Activated naive CD4-positive, alpha-beta T cell treated with anti-CD3 and anti-CD28 coated beads for 36 hours (primary cell): ENCODE measurements at regions of chr1 and their contacts with region 1.

Region 1: DNA sequence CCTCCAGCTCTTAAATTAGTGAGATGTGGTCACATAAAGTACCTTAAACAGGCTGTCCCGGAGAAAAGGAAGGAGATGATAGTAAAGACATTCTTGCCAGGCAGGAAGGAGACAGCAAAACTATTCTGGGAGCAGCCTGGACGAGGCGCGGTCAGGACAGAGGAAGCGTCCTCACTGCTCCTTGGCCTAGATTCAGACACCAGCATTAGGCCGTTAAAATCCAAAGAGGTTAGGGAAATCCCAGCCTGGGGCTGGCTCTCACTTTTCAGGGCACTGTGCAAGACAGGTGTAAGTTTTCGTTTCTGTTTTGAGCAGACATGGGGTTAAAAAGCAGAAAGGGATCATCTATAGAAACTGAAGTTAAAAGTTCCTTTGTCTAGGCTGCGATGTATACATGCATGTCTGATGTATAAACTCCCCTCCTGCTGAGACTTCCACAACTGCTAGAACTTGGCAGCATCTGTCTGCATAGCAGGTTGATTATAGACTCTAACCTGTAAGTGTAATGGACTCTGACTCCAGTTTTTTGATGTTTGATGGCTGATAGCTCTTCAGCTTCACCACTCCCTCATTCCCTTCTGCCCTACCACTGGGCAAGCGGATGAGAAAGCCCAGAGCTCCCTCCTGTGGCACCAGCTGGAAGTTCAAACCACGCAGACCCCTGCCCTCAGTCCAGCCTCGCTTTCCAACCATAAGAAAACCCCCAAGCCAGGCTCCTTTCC is 21.5 kb downstream of the STPG1 start:
- DNase-seq: peak; percentile 80
- H3K4me3 Mint-ChIP-seq: peak overlapping the region; percentile 60
- H3K27ac Mint-ChIP-seq: peak overlapping the region; percentile 86
- H3K4me1 Mint-ChIP-seq: peaks cover 47% of the 10 kb centered on the region
- H3K27me3 Mint-ChIP-seq: no peaks in the 10 kb centered on the region

Region 2: DNA sequence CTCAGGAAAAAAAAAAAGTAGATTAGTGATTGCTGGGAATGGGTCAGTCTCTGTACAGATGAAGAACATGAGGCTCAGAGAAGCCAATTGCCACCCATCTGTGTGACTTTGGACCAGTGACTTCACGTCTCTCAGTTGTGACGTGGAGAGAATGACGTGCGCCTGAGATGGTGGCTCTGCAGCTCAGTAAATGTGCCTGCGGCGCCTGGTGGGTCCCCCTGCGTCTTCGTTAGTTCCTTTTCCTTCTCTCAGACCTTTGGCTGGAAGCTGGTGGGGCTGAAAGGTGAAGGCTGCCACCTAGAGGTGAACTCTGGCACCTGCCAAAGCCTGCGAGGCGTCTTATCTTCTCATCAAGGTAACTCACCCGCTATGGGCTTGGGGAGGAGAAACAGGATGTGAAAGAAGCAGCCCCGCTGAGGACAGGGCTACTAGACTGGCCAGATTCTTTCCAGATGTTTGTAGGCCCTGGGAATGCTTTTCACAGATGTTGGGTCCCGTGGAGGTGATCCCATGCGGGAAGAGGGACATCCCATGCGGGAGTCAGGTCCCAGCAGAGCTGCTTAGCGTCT is 852.3 kb before region 1 on chr1:
- CTCF ChIA-PET with region 1: no interaction called
- intact Hi-C with region 1: no loop called
- DNase-seq: peak; percentile 97
- H3K4me3 Mint-ChIP-seq: peak overlapping the region; percentile 33
- H3K27ac Mint-ChIP-seq: no peak overlapping the region
- H3K4me1 Mint-ChIP-seq: peaks cover 12% of the 10 kb centered on the region
- H3K27me3 Mint-ChIP-seq: no peaks in the 10 kb centered on the region

Region 3: DNA sequence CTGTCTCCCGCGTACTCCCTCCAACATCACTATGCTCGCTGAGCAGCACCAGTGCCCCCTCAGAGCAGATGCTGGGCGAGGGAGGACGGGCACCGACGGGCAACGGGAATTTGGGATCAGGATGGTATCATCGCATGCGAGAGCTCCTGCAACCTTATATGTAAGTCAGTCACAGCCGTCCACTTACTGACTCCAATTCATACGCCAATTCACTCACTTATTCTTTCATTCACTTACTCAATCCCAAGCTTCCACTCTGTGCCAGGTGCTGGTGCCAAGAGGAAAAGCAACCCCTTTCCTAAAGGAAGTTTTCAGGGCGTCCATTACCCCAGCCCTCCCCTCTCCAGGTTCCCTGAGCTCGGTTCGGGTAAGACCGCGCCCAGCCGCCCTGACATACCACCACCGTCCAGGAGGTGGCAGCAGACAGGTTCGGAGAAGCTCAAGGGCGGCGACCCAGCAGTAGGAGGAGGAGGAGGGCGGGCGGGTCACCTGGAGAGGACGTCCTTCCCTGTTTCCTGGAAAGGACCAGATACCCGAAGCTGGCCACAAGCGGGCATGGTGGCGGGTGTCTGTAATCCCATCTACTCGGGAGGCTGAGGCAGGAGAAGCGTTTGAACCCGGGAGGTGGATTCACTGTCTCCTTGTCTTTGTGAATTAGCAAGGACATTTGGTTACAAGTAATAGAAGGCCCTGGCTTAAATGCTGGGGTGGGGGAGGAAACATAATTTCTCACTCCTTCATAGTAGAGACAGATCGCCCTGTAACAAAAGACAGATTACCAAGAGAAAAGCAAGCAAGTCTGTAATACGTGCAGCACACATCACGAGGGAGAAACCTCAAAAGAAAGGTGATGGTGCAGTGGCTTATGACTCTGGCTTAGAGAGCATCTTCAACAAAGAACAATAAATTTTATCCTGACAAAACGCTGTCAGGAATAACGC is 241.5 kb before region 1 on chr1:
- CTCF ChIA-PET with region 1: interaction called, 29 read pairs
- intact Hi-C with region 1: loop called (anchors 1 kb)
- DNase-seq: peak; percentile 95
- H3K4me3 Mint-ChIP-seq: peak overlapping the region; percentile 63
- H3K27ac Mint-ChIP-seq: no peak overlapping the region
- H3K4me1 Mint-ChIP-seq: peaks cover 18% of the 10 kb centered on the region
- H3K27me3 Mint-ChIP-seq: peaks cover 32% of the 10 kb centered on the region

Region 4: GRCh38 chr1:24277420-24278169 is 114.4 kb before region 1 on chr1:
- CTCF ChIA-PET with region 1: interaction called, 12 read pairs
- intact Hi-C with region 1: no loop called
- DNase-seq: peak; percentile 54
- H3K4me3 Mint-ChIP-seq: no peak overlapping the region
- H3K27ac Mint-ChIP-seq: no peak overlapping the region
- H3K4me1 Mint-ChIP-seq: peaks cover 9% of the 10 kb centered on the region
- H3K27me3 Mint-ChIP-seq: peaks cover 14% of the 10 kb centered on the region

Region 5: GRCh38 chr1:24351918-24352627 is 40.0 kb before region 1 on chr1:
- CTCF ChIA-PET with region 1: interaction called, 7 read pairs
- intact Hi-C with region 1: loop called (anchors 2 kb)
- DNase-seq: peak; percentile 94
- H3K4me3 Mint-ChIP-seq: no peak overlapping the region
- H3K27ac Mint-ChIP-seq: peak overlapping the region; percentile 70
- H3K4me1 Mint-ChIP-seq: peaks cover 40% of the 10 kb centered on the region
- H3K27me3 Mint-ChIP-seq: no peaks in the 10 kb centered on the region

Region 6: DNA sequence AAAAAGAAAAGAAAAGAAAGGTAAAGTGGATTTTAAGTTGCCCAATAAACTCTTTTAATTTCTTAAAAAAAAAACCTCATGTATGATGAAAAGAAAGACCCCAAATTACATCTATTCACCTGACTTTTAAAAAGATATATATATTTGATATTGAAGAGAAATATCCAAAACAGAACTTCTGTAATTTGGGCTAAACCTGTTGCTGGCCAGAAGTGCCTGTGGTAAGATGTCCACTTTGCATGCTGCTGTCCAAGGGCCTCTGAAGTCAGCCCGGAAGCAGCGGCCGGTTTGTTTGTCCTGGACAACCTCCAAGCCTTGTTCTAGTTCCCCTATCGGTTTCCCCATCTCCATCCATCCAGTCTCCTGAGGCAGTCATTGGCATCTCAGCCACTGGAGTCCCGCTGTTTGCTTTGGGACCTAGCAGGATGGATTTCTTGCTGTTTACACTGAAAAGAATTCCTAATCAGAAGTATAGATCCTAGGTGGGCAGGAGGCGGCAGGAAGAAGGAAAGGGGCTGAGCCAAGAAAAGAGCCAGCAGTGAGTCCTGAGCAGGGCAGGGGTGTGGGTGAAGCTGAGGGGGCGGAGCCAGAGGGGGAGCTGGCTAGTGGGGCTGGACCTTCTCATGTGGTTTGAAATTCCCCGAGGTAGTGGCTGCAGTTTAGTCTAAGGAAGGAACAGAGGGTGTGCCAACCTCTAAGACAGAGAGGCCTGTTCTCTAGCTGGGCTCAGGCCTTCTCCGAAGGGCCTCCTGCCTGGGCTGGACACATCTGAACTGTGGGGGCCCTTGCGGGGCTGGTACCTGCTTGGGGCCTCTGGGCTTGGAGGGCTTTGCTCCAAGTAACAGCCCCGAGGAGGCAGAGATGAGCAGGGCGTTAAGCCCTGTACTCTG is 167.1 kb after region 1 on chr1:
- CTCF ChIA-PET with region 1: no interaction called
- intact Hi-C with region 1: no loop called
- DNase-seq: no peak
- H3K4me3 Mint-ChIP-seq: no peak overlapping the region
- H3K27ac Mint-ChIP-seq: no peak overlapping the region
- H3K4me1 Mint-ChIP-seq: peaks cover 15% of the 10 kb centered on the region
- H3K27me3 Mint-ChIP-seq: peaks cover 3% of the 10 kb centered on the region

Region 7: DNA sequence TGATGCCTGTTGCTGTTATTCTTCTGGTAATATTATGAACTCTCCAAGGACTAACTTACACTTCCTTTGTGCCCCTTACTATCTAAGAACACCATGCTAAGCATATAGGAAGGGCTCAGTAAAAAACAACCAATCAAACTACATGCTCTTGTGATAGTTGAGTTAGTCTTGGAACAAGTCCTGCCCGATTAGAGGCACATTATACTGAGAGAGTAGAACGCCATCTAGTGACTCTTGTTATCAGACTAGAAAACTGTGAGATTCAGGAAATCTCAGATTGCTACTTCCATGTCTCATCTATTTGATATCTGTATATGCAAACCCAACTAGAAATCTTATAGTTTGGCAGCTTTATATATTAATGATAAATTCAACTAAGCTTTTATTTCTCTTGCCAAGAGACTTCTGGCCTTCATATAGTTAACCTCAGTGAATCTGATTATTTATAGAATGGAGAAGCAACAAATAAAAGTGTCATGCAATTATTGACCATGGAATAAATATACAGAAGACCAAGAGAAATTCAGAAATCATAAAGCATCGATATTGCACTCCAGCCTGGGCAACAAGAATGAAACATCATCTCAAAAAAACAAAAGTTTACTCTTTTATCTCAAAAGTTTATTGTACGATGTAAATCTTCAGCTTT is 243.3 kb after region 1 on chr1:
- CTCF ChIA-PET with region 1: interaction called, 19 read pairs
- intact Hi-C with region 1: loop called (anchors 1 kb)
- DNase-seq: no peak
- H3K4me3 Mint-ChIP-seq: no peak overlapping the region
- H3K27ac Mint-ChIP-seq: no peak overlapping the region
- H3K4me1 Mint-ChIP-seq: peaks cover 11% of the 10 kb centered on the region
- H3K27me3 Mint-ChIP-seq: no peaks in the 10 kb centered on the region

Region 8: GRCh38 chr1:25727635-25728330 is 1335.7 kb after region 1 on chr1:
- CTCF ChIA-PET with region 1: no interaction called
- intact Hi-C with region 1: no loop called
- DNase-seq: no peak
- H3K4me3 Mint-ChIP-seq: no peak overlapping the region
- H3K27ac Mint-ChIP-seq: no peak overlapping the region
- H3K4me1 Mint-ChIP-seq: peaks cover 74% of the 10 kb centered on the region
- H3K27me3 Mint-ChIP-seq: no peaks in the 10 kb centered on the region